Activated T-helper 1 cell treated with anti-CD3 and anti-CD28 coated beads, Interleukin-12 subunit alpha, Interleukin-12 subunit beta, Interleukin-2, Interleukin-4 antibody, amounts not matched to agents 30 ng/mL and 10 ng/mL and 1 ng/mL, durations not matched to agents 14 hours and 24 hours and 36 hours (primary cell): ENCODE measurements at regions of chr11 and their contacts with region 1.

Region 1: DNA sequence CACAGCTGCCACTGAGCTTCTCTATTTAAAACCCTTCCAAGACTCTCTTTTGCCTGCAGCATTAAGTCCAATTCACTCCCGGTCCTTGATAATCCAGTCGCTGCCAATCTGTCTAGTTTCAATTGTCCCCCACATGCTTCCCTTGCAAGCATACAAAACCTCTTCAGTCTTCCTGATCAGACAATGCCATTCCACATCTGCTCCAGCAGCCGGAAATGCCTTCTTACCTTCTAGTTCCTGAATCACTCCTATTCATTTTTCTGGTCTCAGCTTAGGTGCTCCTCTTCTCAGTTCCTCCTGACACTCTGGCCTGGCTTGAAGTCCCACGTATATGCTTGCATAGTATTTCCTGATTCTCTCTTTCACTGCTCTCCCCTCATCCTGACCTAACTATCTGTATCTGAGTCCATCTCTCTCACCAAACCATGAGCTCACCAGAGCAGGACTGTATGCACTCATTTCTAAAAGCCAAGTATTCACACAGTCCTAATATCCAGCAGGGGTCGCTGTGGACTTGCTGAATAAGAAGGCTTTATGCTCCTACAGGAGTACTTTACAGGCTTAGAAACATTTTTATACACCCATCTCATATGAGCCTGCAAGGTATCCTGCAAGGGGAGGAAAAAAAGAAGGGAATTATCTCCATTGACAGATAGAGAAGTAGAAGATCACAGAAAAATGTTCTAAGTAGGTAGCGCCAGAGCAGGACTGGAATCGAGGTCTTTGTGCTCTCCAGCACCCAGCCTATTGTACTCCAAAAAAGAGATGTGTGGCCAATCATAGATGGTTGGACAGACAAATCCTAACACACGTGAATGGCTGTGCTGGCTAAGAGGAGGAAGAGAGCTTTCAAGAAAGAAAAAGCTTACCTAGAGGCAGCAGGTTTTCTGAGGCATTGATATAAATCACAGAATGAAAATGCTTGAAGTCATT is 19.2 kb downstream of the XRRA1 start:
- DNase-seq: peak; percentile 49
- H3K4me3 Mint-ChIP-seq: no peak overlapping the region
- H3K27ac Mint-ChIP-seq: no peak overlapping the region
- H3K4me1 Mint-ChIP-seq: peaks cover 42% of the 10 kb centered on the region
- H3K27me3 Mint-ChIP-seq: no peaks in the 10 kb centered on the region

Region 2: GRCh38 chr11:74988541-74989260 is 59.0 kb after region 1 on chr11 and contains the start of gene NEU3:
- intact Hi-C with region 1: loop called (anchors 1 kb)
- DNase-seq: peak; percentile 79
- H3K4me3 Mint-ChIP-seq: peak within 1 kb of the TSS; percentile 94
- H3K27ac Mint-ChIP-seq: peak within 1 kb of the TSS; percentile 81
- H3K4me1 Mint-ChIP-seq: peaks cover 30% of the 10 kb centered on the region
- H3K27me3 Mint-ChIP-seq: no peaks in the 10 kb centered on the region
- total RNA-seq, gene NEU3: 16.3 and 16.9 TPM in 2 replicates

Region 3: GRCh38 chr11:75031771-75032549 is 102.3 kb after region 1 on chr11:
- intact Hi-C with region 1: loop called (anchors 1 kb)
- DNase-seq: peak; percentile 23
- H3K4me3 Mint-ChIP-seq: no peak overlapping the region
- H3K27ac Mint-ChIP-seq: no peak overlapping the region
- H3K4me1 Mint-ChIP-seq: no peaks in the 10 kb centered on the region
- H3K27me3 Mint-ChIP-seq: no peaks in the 10 kb centered on the region

Region 4: GRCh38 chr11:75204685-75205563 is 275.2 kb after region 1 on chr11:
- intact Hi-C with region 1: loop called (anchors 1 kb)
- DNase-seq: peak; percentile 76
- H3K4me3 Mint-ChIP-seq: no peak overlapping the region
- H3K27ac Mint-ChIP-seq: no peak overlapping the region
- H3K4me1 Mint-ChIP-seq: no peaks in the 10 kb centered on the region
- H3K27me3 Mint-ChIP-seq: peaks cover 6% of the 10 kb centered on the region

Region 5: DNA sequence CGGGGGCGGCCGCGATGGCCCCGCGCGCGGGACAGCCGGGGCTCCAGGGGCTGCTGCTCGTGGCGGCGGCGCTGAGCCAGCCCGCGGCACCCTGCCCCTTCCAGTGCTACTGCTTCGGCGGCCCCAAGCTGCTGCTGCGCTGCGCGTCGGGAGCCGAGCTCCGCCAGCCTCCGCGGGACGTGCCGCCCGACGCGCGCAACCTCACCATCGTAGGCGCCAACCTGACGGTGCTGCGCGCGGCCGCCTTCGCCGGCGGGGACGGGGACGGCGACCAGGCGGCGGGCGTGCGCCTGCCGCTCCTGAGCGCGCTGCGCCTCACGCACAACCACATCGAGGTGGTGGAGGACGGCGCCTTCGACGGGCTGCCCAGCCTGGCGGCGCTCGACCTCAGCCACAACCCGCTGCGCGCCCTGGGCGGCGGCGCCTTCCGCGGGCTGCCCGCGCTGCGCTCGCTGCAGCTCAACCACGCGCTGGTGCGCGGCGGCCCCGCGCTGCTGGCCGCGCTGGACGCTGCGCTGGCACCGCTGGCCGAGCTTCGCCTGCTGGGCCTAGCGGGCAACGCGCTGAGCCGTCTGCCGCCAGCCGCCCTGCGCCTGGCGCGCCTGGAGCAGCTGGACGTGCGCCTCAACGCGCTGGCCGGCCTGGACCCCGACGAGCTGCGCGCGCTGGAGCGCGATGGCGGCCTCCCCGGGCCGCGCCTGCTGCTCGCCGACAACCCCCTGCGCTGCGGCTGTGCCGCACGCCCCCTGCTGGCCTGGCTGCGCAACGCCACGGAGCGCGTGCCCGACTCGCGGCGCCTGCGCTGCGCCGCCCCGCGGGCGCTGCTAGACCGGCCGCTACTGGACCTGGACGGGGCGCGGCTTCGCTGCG is 311.6 kb after region 1 on chr11:
- intact Hi-C with region 1: loop called (anchors 2 kb)
- DNase-seq: peak; percentile 89
- H3K4me3 Mint-ChIP-seq: peak overlapping the region; percentile 58
- H3K27ac Mint-ChIP-seq: no peak overlapping the region
- H3K4me1 Mint-ChIP-seq: peaks cover 6% of the 10 kb centered on the region
- H3K27me3 Mint-ChIP-seq: peaks cover 52% of the 10 kb centered on the region

Region 6: GRCh38 chr11:75248690-75249268 is 319.1 kb after region 1 on chr11:
- intact Hi-C with region 1: loop called (anchors 1 kb)
- DNase-seq: peak; percentile 81
- H3K4me3 Mint-ChIP-seq: no peak overlapping the region
- H3K27ac Mint-ChIP-seq: no peak overlapping the region
- H3K4me1 Mint-ChIP-seq: peaks cover 6% of the 10 kb centered on the region
- H3K27me3 Mint-ChIP-seq: peaks cover 25% of the 10 kb centered on the region